ENCODE measurements at regions of chr1 and their contacts with region 1.

Region 1: GRCh38 chr1:24391882-24392603 is 21.5 kb downstream of the STPG1 start:
- DNase-seq: peak; percentile 33 to 79 (median 49)
- H3K4me3 ChIP-seq: peak overlapping the region; percentile 44
- H3K4me3 Mint-ChIP-seq: peak overlapping the region; percentile 73 to 91 (median 80)
- H3K27ac ChIP-seq: peak overlapping the region; percentile 33
- H3K27ac Mint-ChIP-seq: peak overlapping the region; percentile 86 to 99 (median 97)
- H3K4me1 ChIP-seq: peaks cover 33% of the 10 kb centered on the region
- H3K4me1 Mint-ChIP-seq: peaks cover 23 to 27% (median 25%) of the 10 kb centered on the region in 3 donors
- H3K27me3 ChIP-seq: no peaks in the 10 kb centered on the region
- H3K27me3 Mint-ChIP-seq: peaks cover 0 to 2% of the 10 kb centered on the region in 2 donors

Region 2: GRCh38 chr1:24186993-24187805 is 204.8 kb before region 1 on chr1 and contains the start of gene IFNLR1:
- CTCF ChIA-PET with region 1: interaction called, 38 read pairs
- POLR2A ChIA-PET with region 1: interaction called, 3 read pairs
- DNase-seq: peak; percentile 57 to 83 (median 69)
- H3K4me3 ChIP-seq: peak within 1 kb of the TSS; percentile 66
- H3K4me3 Mint-ChIP-seq: peak within 1 kb of the TSS; percentile 86 to 95 (median 89)
- H3K27ac ChIP-seq: no peak within 1 kb of the TSS
- H3K27ac Mint-ChIP-seq: peak within 1 kb of the TSS; percentile 59 to 95 (median 90)
- H3K4me1 ChIP-seq: peaks cover 32% of the 10 kb centered on the region
- H3K4me1 Mint-ChIP-seq: peaks cover 55 to 74% (median 56%) of the 10 kb centered on the region in 3 donors
- H3K27me3 ChIP-seq: no peaks in the 10 kb centered on the region
- H3K27me3 Mint-ChIP-seq: peaks cover 0 to 3% of the 10 kb centered on the region in 2 donors
- total RNA-seq, gene IFNLR1: 5.4 to 6.1 TPM

Region 3: GRCh38 chr1:24409535-24409934 is 17.5 kb after region 1 on chr1:
- CTCF ChIA-PET with region 1: interaction called, 27 read pairs
- POLR2A ChIA-PET with region 1: no interaction called
- DNase-seq: no peak
- H3K4me3 ChIP-seq: no peak overlapping the region
- H3K4me3 Mint-ChIP-seq: no peak overlapping the region
- H3K27ac ChIP-seq: no peak overlapping the region
- H3K27ac Mint-ChIP-seq: no peak overlapping the region
- H3K4me1 ChIP-seq: peaks cover 17% of the 10 kb centered on the region
- H3K4me1 Mint-ChIP-seq: peaks cover 8 to 25% (median 23%) of the 10 kb centered on the region in 3 donors
- H3K27me3 ChIP-seq: no peaks in the 10 kb centered on the region
- H3K27me3 Mint-ChIP-seq: no peaks in the 10 kb centered on the region

Region 4: DNA sequence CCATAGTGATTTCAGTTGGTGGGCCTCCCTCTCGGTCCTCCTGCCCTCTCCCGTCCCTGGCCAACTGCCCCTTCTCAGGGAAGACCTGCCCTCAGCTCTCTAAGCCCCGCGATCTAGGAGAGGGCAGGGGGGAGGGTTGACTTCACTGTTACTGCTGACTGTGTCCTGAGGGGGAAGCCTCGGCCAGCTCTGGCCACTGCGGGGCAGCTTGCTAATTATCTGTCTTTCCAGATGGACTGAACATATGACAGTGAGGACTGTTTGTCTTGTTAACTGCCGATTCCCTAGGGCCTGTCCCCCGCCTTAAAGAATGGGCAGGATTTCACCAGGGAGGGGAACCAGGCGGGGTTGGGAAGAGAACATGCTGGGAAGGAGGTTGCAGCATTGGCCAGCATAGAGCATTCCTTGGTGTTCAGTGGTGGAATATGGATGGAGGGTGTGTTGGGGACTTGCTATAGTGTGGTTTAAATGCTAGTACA is 46.4 kb after region 1 on chr1:
- CTCF ChIA-PET with region 1: no interaction called
- POLR2A ChIA-PET with region 1: no interaction called
- DNase-seq: no peak
- H3K4me3 ChIP-seq: no peak overlapping the region
- H3K4me3 Mint-ChIP-seq: no peak overlapping the region
- H3K27ac ChIP-seq: no peak overlapping the region
- H3K27ac Mint-ChIP-seq: peak overlapping the region in 2 of 8 donors; percentile 52 to 65
- H3K4me1 ChIP-seq: peaks cover 9% of the 10 kb centered on the region
- H3K4me1 Mint-ChIP-seq: peaks cover 7 to 22% (median 21%) of the 10 kb centered on the region in 3 donors
- H3K27me3 ChIP-seq: no peaks in the 10 kb centered on the region
- H3K27me3 Mint-ChIP-seq: no peaks in the 10 kb centered on the region

Region 5: GRCh38 chr1:24486331-24487065 is 94.5 kb after region 1 on chr1:
- CTCF ChIA-PET with region 1: interaction called, 11 read pairs
- POLR2A ChIA-PET with region 1: no interaction called
- DNase-seq: peak; percentile 8 to 80 (median 55)
- H3K4me3 ChIP-seq: peak overlapping the region; percentile 51
- H3K4me3 Mint-ChIP-seq: peak overlapping the region; percentile 24 to 77 (median 72)
- H3K27ac ChIP-seq: peak overlapping the region; percentile 45
- H3K27ac Mint-ChIP-seq: peak overlapping the region; percentile 58 to 94 (median 80)
- H3K4me1 ChIP-seq: peaks cover 81% of the 10 kb centered on the region
- H3K4me1 Mint-ChIP-seq: peaks cover 50 to 73% (median 65%) of the 10 kb centered on the region in 3 donors
- H3K27me3 ChIP-seq: no peaks in the 10 kb centered on the region
- H3K27me3 Mint-ChIP-seq: peaks cover 0 to 2% of the 10 kb centered on the region in 2 donors

Measured in CD8-positive, alpha-beta memory T cell (primary cell).